GM10248 (cell line): ENCODE measurements at regions of chr4 and their contacts with region 1.

Region 1: DNA sequence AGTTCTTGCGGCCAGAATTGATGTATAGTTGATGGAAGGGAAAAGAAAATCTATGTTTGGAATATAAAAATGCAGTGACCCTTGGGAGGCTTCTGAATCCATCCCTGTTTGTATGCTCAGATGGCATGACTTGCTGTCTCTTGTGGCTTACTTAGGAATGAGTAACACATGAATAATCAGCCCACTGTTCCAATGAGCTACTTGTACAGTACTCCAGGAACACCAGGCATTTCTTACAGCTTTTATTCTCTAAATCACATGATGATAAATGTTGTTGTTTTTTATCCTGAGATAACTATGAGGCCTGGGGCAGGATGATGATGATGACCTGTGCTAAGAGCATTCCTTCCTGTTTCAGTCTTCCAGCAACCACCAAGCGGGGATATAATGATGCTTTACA is 18.9 kb downstream of the TMPRSS11E start:
- DNase-seq: no peak
- CTCF ChIP-seq: no peak

Region 2: DNA sequence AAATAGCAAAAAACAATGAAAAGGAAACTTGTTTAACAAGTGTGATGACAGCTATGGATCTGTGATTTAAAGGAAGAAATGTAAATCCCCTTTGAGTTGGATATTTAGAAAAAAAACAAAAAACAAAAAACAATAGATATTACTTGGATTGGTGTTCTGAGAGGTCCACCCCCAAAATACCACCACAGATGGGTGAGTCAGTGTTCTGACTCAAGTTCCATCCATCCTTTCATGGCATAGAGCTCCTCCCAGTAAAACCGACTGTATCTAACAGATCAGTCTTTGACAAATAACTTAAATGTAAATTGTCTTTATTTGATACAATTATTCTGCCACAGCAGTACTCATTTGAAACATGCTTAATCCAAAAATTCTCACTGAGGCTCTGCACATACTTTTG is 248.1 kb before region 1 on chr4:
- CTCF ChIA-PET with region 1: no interaction called
- POLR2A ChIA-PET with region 1: no interaction called
- DNase-seq: no peak
- CTCF ChIP-seq: no peak

Region 3: DNA sequence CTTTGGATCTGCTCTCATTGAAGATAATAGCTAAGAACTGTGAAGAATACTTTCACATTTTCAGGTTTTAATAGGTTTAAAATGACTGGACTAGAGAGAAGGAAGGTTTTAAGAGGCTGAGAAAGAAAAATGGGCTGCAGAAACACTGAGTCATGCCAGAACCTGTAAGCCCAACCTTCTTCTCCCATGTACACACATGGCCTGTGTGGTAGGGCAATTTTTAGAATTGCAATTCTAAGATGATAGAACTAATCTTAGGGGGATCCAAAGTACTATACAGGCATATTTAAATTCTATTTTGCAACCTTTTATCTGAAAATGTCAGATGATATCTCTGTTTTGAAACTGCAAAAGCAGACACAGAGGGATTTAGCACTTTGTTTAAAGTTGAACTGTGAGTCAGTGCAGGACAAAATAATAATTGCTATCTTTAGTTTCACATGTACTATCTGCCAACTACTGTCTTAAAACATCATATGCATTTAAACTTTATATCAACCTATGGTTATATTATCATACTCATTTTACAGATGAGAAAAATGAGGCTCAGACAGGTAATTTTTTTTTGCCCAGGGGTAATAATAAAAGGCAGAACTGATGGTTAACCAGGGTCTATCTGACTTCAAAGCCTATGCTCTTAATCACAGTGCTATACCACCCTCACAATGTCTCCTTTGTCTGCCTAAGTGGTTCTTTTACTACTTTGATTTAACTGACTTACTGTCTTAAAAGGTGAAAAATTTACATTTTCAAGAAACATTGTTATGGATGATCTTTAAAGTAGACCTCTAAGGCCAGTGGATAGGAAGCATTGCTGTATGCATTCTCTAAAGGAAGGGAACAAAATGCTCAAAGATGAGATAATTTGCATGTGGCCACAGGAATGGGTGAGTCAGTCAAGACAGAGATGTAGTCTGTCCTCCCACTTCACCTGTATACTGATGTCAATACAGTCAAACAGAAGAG is 14.7 kb before region 1 on chr4:
- CTCF ChIA-PET with region 1: interaction called, 10 read pairs
- POLR2A ChIA-PET with region 1: no interaction called
- DNase-seq: no peak
- CTCF ChIP-seq: no peak

Region 4: GRCh38 chr4:68655764-68656444 is 189.7 kb after region 1 on chr4:
- CTCF ChIA-PET with region 1: no interaction called
- POLR2A ChIA-PET with region 1: no interaction called
- DNase-seq: no peak
- CTCF ChIP-seq: no peak